ENCODE measurements at regions of chr19 and their contacts with region 1.

Region 1: GRCh38 chr19:23321948-23322549 is 71.9 kb upstream of the ZNF724 start:
- DNase-seq: no peak
- ATAC-seq: no peak

Region 2: DNA sequence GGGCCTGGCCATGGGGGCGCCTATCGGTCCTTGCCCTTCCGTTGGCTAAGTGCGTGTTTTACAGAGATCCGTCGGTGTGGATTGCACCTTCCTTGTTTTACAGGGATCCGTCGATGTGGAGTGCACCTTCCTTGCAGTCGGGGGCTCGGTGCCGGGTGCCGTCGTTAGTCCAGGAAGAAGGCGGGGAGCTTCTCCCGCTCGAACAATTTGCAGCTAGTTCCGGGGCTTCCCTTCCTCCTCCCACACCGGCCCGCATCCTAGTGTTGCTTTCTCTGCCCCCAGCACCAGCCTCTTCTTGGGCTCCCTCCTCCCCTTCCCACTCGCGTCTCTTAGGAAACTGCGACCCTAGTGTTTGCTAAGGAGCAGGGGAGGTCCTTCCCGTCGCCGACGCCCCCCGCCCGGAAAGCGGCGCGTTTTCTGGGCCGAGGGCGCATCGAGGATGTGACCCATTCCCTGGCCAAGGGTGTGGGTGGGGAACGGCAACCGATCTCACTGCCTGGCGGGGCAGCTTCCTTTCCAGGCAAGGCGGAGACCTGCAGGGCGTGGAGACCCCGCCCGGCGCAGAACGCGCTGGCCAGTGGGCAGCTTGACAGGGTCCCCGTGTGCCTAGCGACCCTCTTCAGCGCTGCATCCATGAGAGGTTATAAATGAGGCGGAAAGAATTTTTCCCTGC is 149.0 kb after region 1 on chr19:
- intact Hi-C with region 1: loop called (anchors 5 kb)
- DNase-seq: no peak
- ATAC-seq: no peak